Right cardiac atrium (tissue), 5 donors: ENCODE measurements at regions of chr4 and their contacts with region 1.

Region 1: DNA sequence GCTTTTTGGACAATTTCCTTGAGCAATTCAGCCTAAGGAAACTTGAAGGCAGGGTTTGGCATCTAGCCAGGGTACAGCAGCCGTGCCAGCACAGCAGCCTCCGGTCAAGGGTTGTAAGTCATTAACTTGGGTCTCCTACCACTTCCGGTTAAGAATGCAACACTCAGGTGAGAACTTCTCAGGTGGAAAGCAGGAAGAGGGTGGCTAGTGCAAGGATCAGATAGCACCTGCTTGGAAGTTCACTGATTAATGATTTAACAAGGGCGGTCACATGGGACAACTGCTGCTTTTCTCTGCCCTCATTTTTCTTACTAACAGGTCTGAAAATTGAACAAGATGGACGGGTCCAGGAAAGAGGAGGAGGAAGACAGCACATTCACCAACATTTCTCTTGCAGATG is 30.1 kb upstream of the SCOC start:
- DNase-seq: peak in 2 of 3 donors; percentile 31 to 58
- ATAC-seq: peak; percentile 19 to 40
- H3K4me3 ChIP-seq: no peak overlapping the region
- H3K27ac ChIP-seq: no peak overlapping the region
- H3K4me1 ChIP-seq: peaks cover 2% of the 10 kb centered on the region
- H3K27me3 ChIP-seq: no peaks in the 10 kb centered on the region

Region 2: GRCh38 chr4:140286456-140286855 is 56.8 kb before region 1 on chr4:
- intact Hi-C with region 1: no loop called
- DNase-seq: peak in 1 of 3 donors; percentile 57
- ATAC-seq: no peak
- H3K4me3 ChIP-seq: no peak overlapping the region
- H3K27ac ChIP-seq: no peak overlapping the region
- H3K4me1 ChIP-seq: no peaks in the 10 kb centered on the region
- H3K27me3 ChIP-seq: no peaks in the 10 kb centered on the region

Region 3: GRCh38 chr4:140839888-140840790 is 496.8 kb after region 1 on chr4:
- intact Hi-C with region 1: loop called in 1 of 4 experiments (anchors 10 kb)
- DNase-seq: peak in 1 of 3 donors; percentile 39
- ATAC-seq: no peak
- H3K4me3 ChIP-seq: no peak overlapping the region
- H3K27ac ChIP-seq: no peak overlapping the region
- H3K4me1 ChIP-seq: peaks cover 1% of the 10 kb centered on the region
- H3K27me3 ChIP-seq: no peaks in the 10 kb centered on the region